Heart right ventricle (tissue), 16 donors: ENCODE measurements at regions of chr3 and their contacts with region 1.

Region 1: DNA sequence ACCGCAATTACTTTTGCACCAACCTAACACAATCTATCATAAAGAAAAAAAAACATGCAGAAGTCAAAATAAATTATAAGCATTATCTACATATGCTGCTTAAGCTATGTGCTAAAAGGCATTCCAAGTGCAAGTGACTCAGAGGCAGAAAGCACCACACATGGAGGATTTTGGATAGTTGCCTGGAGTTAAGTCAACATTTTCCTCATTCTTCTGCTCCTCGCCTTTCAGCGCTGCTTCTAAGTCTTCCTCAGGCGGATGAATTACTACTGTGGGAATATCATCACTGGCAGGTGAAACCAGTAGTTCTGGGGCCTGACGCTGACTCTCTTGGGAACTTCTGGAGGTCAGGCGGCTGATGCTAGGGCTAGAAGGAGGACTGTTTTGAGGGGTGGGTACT is 53.1 kb downstream of the SLC4A7 start:
- DNase-seq: peak in 1 of 2 donors; percentile 8
- ATAC-seq: peak in 5 of 8 donors; percentile 24 to 49 (median 37)
- H3K4me3 ChIP-seq: no peak overlapping the region
- H3K27ac ChIP-seq: no peak overlapping the region
- H3K4me1 ChIP-seq: peaks cover 0 to 4% (median 0%) of the 10 kb centered on the region in 9 donors
- H3K27me3 ChIP-seq: no peaks in the 10 kb centered on the region
- CTCF ChIP-seq: no peak

Region 2: GRCh38 chr3:27449530-27450150 is 18.5 kb after region 1 on chr3:
- intact Hi-C with region 1: loop called in 1 of 10 experiments (anchors 2 kb)
- DNase-seq: no peak
- ATAC-seq: no peak
- H3K4me3 ChIP-seq: no peak overlapping the region
- H3K27ac ChIP-seq: no peak overlapping the region
- H3K4me1 ChIP-seq: peaks cover 0 to 23% (median 0%) of the 10 kb centered on the region in 9 donors
- H3K27me3 ChIP-seq: no peaks in the 10 kb centered on the region
- CTCF ChIP-seq: no peak